ENCODE measurements at regions of chr3 and their contacts with region 1.

Region 1: GRCh38 chr3:155890671-155891190 is 20.3 kb downstream of the GMPS start:
- DNase-seq: no peak
- ATAC-seq: peak; percentile 74
- H3K4me3 ChIP-seq: no peak overlapping the region
- H3K27ac ChIP-seq: no peak overlapping the region
- H3K4me1 ChIP-seq: no peaks in the 10 kb centered on the region
- H3K27me3 ChIP-seq: no peaks in the 10 kb centered on the region
- CTCF ChIP-seq: no peak
- EP300 ChIP-seq: no peak
- POLR2A ChIP-seq: no peak
- RAD21 ChIP-seq: no peak

Region 2: GRCh38 chr3:155880286-155880685 is 10.4 kb before region 1 on chr3:
- CTCF ChIA-PET with region 1: no interaction called
- POLR2A ChIA-PET with region 1: no interaction called
- RAD21 ChIA-PET with region 1: no interaction called
- SMC1A ChIA-PET with region 1: interaction called, 5 read pairs
- in situ Hi-C with region 1: no loop called
- intact Hi-C with region 1: loop called (anchors 1 kb)
- DNase-seq: no peak
- ATAC-seq: peak; percentile 79
- H3K4me3 ChIP-seq: peak overlapping the region; percentile 15; the same call in 1 of the 2 replicates
- H3K27ac ChIP-seq: no peak overlapping the region
- H3K4me1 ChIP-seq: peaks cover 8% of the 10 kb centered on the region
- H3K27me3 ChIP-seq: no peaks in the 10 kb centered on the region
- CTCF ChIP-seq: no peak
- EP300 ChIP-seq: peak in 1 of 2 experiments; percentile 32; a peak in 1 of 4 replicates
- POLR2A ChIP-seq: no peak
- RAD21 ChIP-seq: no peak

Region 3: GRCh38 chr3:156522673-156523072 is 631.9 kb after region 1 on chr3:
- CTCF ChIA-PET with region 1: no interaction called
- POLR2A ChIA-PET with region 1: no interaction called
- RAD21 ChIA-PET with region 1: no interaction called
- SMC1A ChIA-PET with region 1: no interaction called
- in situ Hi-C with region 1: no loop called
- intact Hi-C with region 1: no loop called
- DNase-seq: no peak
- ATAC-seq: no peak
- H3K4me3 ChIP-seq: no peak overlapping the region
- H3K27ac ChIP-seq: no peak overlapping the region
- H3K4me1 ChIP-seq: no peaks in the 10 kb centered on the region
- H3K27me3 ChIP-seq: no peaks in the 10 kb centered on the region
- CTCF ChIP-seq: no peak
- EP300 ChIP-seq: no peak
- POLR2A ChIP-seq: no peak
- RAD21 ChIP-seq: no peak